ENCODE measurements at regions of chr9 and their contacts with region 1.

Region 1: DNA sequence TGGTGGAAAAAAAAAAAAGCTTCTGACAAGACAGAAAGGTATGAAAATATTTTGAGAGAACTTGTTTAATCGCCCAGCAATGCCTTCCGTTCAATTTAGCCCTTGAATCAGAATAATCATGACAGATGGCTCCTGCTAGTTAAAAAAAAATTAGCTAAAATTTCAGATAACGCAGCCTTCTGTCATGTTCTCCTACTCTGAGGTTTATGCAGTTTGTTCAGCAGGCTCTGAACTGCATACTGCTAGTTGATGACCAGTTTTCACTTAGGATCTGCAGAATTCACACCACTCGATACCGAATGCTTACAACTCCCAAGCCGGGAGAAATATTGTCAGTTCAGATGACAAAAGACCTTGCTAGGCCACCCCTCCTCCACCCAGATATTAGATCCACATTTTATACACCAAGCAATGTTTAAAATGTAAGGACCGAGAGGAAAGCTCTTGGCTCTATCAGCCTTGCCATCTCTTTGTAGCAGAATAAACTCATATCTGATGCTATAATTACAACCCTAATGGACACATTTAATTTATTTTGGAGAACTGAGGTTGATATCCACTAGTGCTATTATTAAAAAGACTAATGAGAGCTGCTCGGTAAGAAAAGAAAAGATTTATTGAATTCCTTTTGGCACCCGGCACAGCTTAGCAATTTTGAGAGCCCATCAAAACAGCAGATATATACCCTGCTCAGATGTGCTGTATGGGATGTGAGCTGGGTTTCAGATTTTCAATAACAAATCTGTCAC is 322.8 kb downstream of the GLIS3 start:
- DNase-seq: no peak
- ATAC-seq: no peak
- H3K4me3 ChIP-seq: no peak overlapping the region
- H3K27ac ChIP-seq: no peak overlapping the region
- H3K4me1 ChIP-seq: no peaks in the 10 kb centered on the region
- H3K27me3 ChIP-seq: no peaks in the 10 kb centered on the region
- CTCF ChIP-seq: no peak

Region 2: GRCh38 chr9:3993773-3994540 is 16.9 kb after region 1 on chr9:
- CTCF ChIA-PET with region 1: no interaction called
- POLR2A ChIA-PET with region 1: no interaction called
- in situ Hi-C with region 1: no loop called
- intact Hi-C with region 1: no loop called
- DNase-seq: no peak
- ATAC-seq: no peak
- H3K4me3 ChIP-seq: no peak overlapping the region
- H3K27ac ChIP-seq: no peak overlapping the region
- H3K4me1 ChIP-seq: no peaks in the 10 kb centered on the region
- H3K27me3 ChIP-seq: no peaks in the 10 kb centered on the region
- CTCF ChIP-seq: 0 out of 2 replicates have a peak, but pooled peaks have one; percentile 5

Region 3: GRCh38 chr9:4334410-4334813 is 357.4 kb after region 1 on chr9:
- CTCF ChIA-PET with region 1: no interaction called
- POLR2A ChIA-PET with region 1: interaction called, 13 read pairs
- in situ Hi-C with region 1: no loop called
- intact Hi-C with region 1: no loop called
- DNase-seq: no peak
- ATAC-seq: no peak
- H3K4me3 ChIP-seq: no peak overlapping the region
- H3K27ac ChIP-seq: no peak overlapping the region
- H3K4me1 ChIP-seq: no peaks in the 10 kb centered on the region
- H3K27me3 ChIP-seq: no peaks in the 10 kb centered on the region
- CTCF ChIP-seq: no peak

Region 4: GRCh38 chr9:4382722-4383317 is 405.8 kb after region 1 on chr9:
- CTCF ChIA-PET with region 1: no interaction called
- POLR2A ChIA-PET with region 1: no interaction called
- in situ Hi-C with region 1: no loop called
- intact Hi-C with region 1: no loop called
- DNase-seq: no peak
- ATAC-seq: no peak
- H3K4me3 ChIP-seq: no peak overlapping the region
- H3K27ac ChIP-seq: no peak overlapping the region
- H3K4me1 ChIP-seq: no peaks in the 10 kb centered on the region
- H3K27me3 ChIP-seq: no peaks in the 10 kb centered on the region
- CTCF ChIP-seq: peak; percentile 38; the same call in 1 of the 2 replicates